ENCODE measurements at regions of chr12 and their contacts with region 1.

Region 1: GRCh38 chr12:52121824-52122539 is 42.5 kb downstream of the SMIM41 start:
- DNase-seq: peak; percentile 74 to 83
- H3K4me3 ChIP-seq: no peak overlapping the region
- H3K4me3 Mint-ChIP-seq: no peak overlapping the region
- H3K27ac Mint-ChIP-seq: no peak overlapping the region
- H3K4me1 ChIP-seq: peaks cover 21% of the 10 kb centered on the region
- H3K4me1 Mint-ChIP-seq: peaks cover 20% of the 10 kb centered on the region
- H3K27me3 ChIP-seq: no peaks in the 10 kb centered on the region
- H3K27me3 Mint-ChIP-seq: no peaks in the 10 kb centered on the region
- CTCF ChIP-seq: peak; percentile 96

Region 2: GRCh38 chr12:52087961-52088820 is 33.8 kb before region 1 on chr12:
- CTCF ChIA-PET with region 1: interaction called, 9 read pairs
- POLR2A ChIA-PET with region 1: no interaction called
- intact Hi-C with region 1: loop called (anchors 2 kb)
- DNase-seq: no peak
- H3K4me3 ChIP-seq: no peak overlapping the region
- H3K4me3 Mint-ChIP-seq: no peak overlapping the region
- H3K27ac Mint-ChIP-seq: no peak overlapping the region
- H3K4me1 ChIP-seq: peaks cover 12% of the 10 kb centered on the region
- H3K4me1 Mint-ChIP-seq: peaks cover 16% of the 10 kb centered on the region
- H3K27me3 ChIP-seq: no peaks in the 10 kb centered on the region
- H3K27me3 Mint-ChIP-seq: peaks cover 7% of the 10 kb centered on the region
- CTCF ChIP-seq: no peak